Left cardiac atrium (tissue), 4 donors: ENCODE measurements at regions of chr12 and their contacts with region 1.

Region 1: DNA sequence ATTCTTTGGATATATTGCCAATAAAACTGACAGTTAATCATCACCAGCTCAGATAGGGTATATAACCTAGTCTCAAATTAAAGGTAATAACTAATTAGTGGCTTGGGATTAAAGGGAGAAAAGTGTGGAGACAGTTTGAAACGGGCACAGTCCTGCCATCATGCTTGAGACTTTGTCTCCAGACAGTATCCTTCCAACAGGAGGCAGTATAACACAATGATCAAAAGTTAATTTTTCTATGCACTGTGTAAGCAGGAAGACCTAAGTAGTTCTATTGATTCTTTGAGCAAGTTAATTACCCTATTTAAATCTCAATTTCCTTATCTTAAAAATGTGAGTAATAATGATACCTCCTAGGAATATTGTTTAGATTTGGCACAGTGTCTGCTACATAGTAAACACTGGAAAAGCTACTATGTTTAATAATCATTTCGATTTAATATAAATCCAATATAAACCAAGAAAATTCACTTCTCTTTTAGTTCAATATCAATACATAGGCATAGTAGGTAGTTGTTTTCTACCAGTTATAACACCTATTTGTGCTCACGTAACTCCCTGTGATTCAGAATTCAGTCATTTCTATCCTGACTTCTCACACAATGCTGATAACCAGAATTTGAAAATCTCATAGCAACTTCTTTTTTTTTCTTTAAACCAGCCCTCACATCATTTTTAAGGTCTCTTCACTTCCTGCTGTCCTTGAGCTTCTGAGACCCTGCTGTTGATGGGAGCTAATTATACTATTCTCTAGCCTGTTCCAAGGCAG is 53.7 kb downstream of the GALNT4 start:
- DNase-seq: no peak
- ATAC-seq: peak; percentile 76 to 78

Region 2: DNA sequence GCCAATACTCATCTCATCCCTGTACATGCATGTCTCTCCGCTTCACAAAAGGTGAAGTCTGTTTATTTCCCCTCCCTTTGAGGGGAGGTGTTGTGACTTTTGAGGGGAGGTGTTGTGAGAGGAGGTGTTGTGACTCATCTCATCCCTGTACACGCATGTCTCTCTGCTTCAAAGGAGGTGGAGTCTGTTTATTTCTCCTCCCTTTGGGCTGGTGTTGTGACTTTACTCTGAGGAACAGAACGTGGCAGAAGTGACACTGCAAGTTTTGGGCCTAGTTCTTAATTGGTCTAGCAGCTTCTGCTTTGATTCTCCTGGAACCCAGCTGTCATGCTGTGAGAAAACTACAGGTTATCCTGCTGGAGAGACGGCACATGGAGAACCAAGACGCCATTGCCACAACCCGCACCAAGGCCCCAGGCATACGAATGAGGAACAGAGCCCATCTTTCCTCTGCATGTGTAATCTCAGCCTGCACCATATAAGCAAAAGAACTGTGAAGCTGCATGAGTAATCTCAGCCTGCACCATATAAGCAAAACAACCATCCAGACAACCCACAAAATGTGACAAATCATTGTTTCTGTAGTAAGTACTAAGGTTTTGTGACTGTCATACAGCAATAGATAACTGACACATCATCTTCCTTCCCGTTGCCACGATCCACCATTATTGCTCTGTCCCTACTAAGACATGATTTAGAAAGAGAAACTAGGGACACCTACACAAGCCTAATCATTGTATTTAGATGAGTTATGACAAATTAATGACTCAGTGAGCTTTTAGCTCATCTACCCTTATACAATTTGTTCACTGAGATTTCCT is 23.7 kb after region 1 on chr12:
- intact Hi-C with region 1: no loop called
- DNase-seq: no peak
- ATAC-seq: no peak

Region 3: DNA sequence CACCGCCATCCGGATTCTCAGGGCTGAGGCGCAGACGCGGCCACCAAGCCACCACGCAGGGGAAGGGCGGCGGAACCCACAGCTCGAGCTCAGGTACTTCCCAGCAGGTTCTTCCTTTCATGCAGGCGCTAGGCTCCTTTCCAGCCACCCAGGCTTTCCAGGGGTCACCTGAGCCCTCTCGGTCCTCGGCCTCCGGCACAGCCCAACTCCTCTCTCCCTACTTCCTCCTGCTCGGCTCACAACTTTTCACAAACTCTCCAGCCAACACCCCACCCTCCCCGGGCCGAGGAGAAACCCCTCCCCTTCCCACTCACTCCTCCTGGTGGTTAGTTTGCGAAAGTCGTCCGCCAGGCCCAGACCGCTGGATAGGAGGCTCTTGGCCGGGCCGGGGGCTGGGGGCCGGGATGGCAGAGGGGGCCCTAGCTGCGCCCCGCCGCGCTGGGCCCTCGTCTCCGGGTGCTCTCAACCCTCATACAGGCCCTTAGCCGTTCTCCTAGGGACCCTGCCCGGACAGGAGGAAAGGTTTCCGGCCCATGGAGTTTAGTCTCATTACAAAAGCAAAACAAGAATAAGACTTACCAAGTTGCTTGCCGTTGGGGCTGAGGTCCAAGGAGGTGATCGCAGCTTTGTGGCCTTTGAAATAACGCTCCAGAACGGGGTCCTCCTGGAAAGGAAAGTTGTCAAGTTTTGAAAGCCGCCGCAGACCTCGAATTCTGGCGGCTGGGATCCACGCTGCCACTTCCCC is 53.8 kb after region 1 on chr12 and contains the start of gene GALNT4:
- intact Hi-C with region 1: loop called (anchors 2 to 5 kb)
- DNase-seq: peak; percentile 89
- ATAC-seq: peak; percentile 94 to 95
- total RNA-seq, gene GALNT4: 4.2 to 4.3 TPM

Region 4: GRCh38 chr12:89529738-89530137 is 58.8 kb after region 1 on chr12:
- intact Hi-C with region 1: loop called (anchors 2 to 5 kb)
- DNase-seq: no peak
- ATAC-seq: no peak